ENCODE measurements at regions of chr15 and their contacts with region 1.

Region 1: DNA sequence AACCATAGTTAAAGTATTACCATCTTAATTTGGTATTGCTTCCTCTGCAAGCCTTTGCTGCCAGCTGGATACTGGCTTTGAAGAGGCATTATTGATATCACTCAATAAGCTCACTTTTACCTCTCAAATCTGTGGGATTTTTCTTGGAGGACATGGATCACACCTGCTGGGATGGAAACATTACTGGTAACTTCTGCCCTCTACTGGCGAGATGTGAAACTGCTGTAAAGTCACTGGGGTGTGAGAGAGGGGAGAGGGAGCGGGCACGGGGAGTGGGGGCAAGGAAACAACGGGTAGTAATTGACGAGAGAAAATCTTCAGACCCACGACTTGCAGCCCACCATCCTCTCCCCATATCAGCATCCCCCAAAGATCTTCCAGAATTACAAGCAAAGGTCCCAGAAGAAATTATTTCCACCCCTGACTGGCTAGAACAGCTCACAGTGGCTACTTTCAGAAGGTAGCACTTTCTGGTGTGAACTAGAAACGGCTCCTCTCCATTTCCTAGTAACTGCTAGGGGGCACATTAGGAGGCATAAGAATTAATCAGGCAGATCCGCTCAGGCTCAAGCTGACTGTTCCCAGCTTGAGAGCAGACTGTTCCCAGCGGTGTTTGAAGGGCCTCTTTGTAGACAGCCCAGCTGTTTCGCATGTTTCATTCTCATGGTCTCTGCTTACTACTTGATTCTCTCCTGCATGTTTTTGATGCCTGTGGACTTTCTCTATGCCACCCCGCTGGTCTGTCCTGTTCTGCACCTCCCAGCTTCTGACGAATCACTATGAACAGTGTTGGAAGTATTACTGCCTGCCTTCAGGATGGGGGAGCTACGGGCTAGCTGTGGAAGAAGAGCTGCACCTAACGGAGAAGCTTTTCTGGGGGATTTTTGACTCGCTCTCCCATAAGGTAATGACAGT is 230.4 kb upstream of the CHRM5 start:
- DNase-seq: no peak
- H3K4me3 ChIP-seq: no peak overlapping the region
- H3K27ac ChIP-seq: no peak overlapping the region
- H3K4me1 ChIP-seq: no peaks in the 10 kb centered on the region
- H3K27me3 ChIP-seq: no peaks in the 10 kb centered on the region
- CTCF ChIP-seq: peak; percentile 74 to 87 (median 86)

Region 2: GRCh38 chr15:33963831-33964664 is 226.1 kb after region 1 on chr15:
- dilution Hi-C with region 1: loop called (anchors 25 kb)
- DNase-seq: no peak
- H3K4me3 ChIP-seq: no peak overlapping the region
- H3K27ac ChIP-seq: no peak overlapping the region
- H3K4me1 ChIP-seq: no peaks in the 10 kb centered on the region
- H3K27me3 ChIP-seq: no peaks in the 10 kb centered on the region
- CTCF ChIP-seq: peak in 2 of 3 experiments; percentile 53 to 59